ENCODE measurements at regions of chr13 and their contacts with region 1.

Region 1: GRCh38 chr13:100088644-100089464 is at the start of gene PCCA:
- DNase-seq: peak; percentile 94
- H3K4me3 ChIP-seq: peak within 1 kb of the TSS; percentile 56 to 82 (median 82)
- H3K27ac ChIP-seq: peak within 1 kb of the TSS; percentile 43
- H3K4me1 ChIP-seq: peaks cover 8% of the 10 kb centered on the region
- H3K27me3 ChIP-seq: no peaks in the 10 kb centered on the region
- CTCF ChIP-seq: no peak
- POLR2A ChIP-seq: peak; percentile 85
- total RNA-seq, gene PCCA: 19.8 and 20.2 TPM in 2 replicates

Region 2: DNA sequence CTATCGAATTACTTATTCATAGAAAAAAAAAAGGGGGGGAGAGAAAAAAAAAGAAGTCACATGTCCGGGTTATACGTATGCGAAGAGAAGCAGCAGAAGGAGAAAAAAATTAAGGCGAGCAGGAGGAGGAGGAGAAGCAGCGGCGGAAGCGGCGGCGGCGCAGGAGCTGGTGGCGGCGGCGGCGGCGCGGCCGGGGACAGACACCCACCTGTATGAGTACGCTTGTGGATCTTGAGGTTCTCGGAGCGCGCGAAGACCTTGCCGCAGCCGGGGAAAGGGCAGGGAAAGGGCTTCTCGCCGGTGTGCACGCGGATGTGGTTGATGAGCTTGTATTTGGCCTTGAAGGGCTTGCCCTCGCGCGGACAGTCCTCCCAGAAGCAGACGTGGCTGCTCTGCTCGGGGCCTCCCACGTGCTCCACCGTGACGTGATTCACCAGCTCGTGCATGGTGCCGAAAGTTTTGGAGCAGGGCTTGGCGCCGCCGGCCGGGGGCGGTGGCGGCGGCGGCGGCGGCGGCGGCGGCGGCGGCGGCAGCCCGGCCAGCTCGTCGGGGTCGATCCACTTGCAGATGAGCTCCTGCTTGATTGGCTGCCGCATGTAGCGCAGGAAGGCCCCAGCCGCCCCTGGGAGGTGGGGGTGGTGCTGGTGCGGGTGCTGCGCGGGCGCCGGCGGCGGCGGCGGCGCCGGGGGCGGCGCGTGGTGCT is 118.8 kb before region 1 on chr13:
- CTCF ChIA-PET with region 1: no interaction called
- POLR2A ChIA-PET with region 1: no interaction called
- dilution Hi-C with region 1: no loop called
- intact Hi-C with region 1: loop called (anchors 2 kb)
- DNase-seq: no peak
- H3K4me3 ChIP-seq: no peak overlapping the region
- H3K27ac ChIP-seq: no peak overlapping the region
- H3K4me1 ChIP-seq: no peaks in the 10 kb centered on the region
- H3K27me3 ChIP-seq: peaks cover 79 to 94% of the 10 kb centered on the region in 2 experiments
- CTCF ChIP-seq: no peak
- POLR2A ChIP-seq: no peak

Region 3: DNA sequence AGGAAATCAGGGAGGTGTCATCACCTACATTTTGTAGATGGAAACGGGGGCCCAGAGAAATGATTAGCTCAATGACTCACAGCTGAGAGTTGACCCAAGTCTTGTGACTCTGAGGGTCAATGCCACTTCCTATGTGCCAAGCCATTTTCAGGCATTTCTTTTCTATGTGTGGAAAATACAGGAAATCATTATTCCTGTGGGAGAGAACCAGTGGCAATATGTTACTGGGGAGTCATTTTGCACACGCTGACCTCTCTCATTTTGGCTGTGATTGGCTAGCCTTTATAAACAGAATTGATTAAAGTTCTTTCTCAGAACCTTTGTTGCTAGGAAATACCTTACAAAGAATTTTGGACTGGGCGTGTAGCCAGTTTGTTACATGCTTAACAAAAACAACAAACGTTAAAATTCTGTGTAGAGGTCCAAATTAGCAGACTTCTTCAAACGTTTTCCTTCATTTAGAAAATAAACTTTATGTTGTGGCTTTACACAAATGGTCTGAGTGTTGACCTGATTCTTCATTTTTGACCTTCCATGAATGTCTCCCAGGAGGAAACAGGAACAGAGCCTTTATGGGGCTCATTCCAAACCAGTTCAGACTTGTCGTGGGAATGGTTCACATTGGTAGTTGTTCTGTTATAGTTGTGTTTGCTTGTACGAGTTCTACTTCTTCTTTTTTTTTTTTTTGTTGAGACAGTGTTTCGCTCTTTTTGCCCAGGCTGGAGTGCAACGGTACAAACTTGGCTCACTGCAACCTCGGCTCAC is 11.4 kb after region 1 on chr13:
- CTCF ChIA-PET with region 1: interaction called, 11 read pairs
- POLR2A ChIA-PET with region 1: no interaction called
- dilution Hi-C with region 1: no loop called
- intact Hi-C with region 1: loop called (anchors 1 kb)
- DNase-seq: peak; percentile 96
- H3K4me3 ChIP-seq: peak overlapping the region in 1 of 3 experiments; percentile 10
- H3K27ac ChIP-seq: peak overlapping the region; percentile 4
- H3K4me1 ChIP-seq: peaks cover 16% of the 10 kb centered on the region
- H3K27me3 ChIP-seq: no peaks in the 10 kb centered on the region
- CTCF ChIP-seq: no peak
- POLR2A ChIP-seq: no peak

Region 4: GRCh38 chr13:100131863-100132574 is 43.2 kb after region 1 on chr13:
- CTCF ChIA-PET with region 1: no interaction called
- POLR2A ChIA-PET with region 1: no interaction called
- dilution Hi-C with region 1: no loop called
- intact Hi-C with region 1: loop called (anchors 1 kb)
- DNase-seq: peak; percentile 97
- H3K4me3 ChIP-seq: no peak overlapping the region
- H3K27ac ChIP-seq: peak overlapping the region; percentile 57
- H3K4me1 ChIP-seq: peaks cover 20% of the 10 kb centered on the region
- H3K27me3 ChIP-seq: no peaks in the 10 kb centered on the region
- CTCF ChIP-seq: no peak
- POLR2A ChIP-seq: no peak

Region 5: DNA sequence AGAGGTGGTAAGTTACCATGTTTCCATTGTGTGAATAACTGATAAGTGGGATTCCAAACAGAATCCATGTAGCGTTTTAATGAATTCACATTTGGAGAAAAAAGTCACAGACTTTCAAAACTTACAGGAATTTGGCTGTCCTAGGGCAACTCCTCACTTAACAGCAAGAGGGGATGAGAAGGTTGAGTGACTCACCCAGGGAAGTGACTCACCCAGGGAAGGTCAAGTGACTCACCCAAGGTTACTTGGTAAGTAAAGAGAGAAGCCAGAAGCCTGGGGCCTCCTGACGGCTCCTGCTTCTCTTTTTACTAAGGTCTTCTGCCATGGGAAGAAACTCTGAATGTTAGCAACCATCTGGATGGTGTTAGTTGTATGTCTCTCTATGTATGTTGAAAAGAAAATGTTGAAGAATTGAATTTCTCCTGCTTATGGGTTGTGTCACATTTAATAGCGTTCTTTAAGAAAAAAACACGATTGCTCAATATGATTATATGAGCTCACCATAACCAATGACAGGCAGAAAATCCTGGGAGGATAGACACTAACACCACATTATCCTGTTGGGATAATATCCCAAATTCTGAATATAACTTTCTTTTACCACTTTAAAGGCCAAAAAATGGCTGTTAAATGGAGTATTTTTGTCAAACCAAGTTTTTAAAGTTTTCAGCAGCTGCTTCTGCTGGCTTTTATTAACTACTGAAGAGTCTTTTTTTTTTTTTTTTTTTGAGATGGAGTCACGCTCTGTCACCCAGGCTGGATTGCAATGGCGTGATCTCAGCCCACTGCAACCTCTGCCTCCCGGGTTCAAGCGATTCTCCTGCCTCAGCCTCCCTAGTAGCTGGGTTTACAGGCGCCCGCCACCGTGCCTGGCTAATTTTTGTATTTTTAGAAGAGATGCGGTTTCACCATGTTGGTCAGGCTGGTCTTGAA is 304.1 kb after region 1 on chr13:
- CTCF ChIA-PET with region 1: no interaction called
- POLR2A ChIA-PET with region 1: no interaction called
- dilution Hi-C with region 1: no loop called
- intact Hi-C with region 1: loop called (anchors 2 kb)
- DNase-seq: peak; percentile 99
- H3K4me3 ChIP-seq: no peak overlapping the region
- H3K27ac ChIP-seq: peak overlapping the region; percentile 87
- H3K4me1 ChIP-seq: peaks cover 35% of the 10 kb centered on the region
- H3K27me3 ChIP-seq: no peaks in the 10 kb centered on the region
- CTCF ChIP-seq: no peak
- POLR2A ChIP-seq: no peak

Region 6: DNA sequence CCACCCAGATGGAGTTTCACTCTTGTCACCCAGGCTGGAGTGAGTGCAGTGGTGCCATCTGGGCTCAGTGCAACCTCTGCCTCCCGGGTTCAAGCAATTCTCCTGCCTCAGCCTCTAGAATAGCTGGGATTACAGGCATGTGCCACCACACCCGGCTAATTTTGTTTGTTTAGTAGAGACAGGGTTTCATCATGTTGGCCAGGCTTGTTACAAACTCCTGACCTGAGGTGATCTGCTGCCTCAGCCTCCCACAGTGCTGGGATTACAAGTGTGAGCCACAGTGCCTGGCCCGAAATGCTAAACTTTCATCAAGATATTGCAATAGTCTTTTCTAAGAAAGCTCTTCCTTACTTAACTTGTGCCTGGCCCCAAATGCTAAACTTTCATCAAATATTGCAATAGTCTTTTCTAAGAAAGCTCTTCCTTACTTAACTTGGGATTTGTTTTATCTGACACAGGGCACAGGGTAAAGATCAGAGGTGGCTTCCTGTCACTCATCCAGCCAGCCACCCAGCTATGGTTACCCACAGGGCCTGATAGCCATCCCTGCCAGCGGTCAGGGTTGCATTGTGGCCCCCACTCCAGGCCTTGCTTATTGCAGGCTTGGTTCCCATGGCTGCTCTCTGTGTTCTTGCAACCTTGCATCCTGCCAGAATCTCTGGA is 938.0 kb after region 1 on chr13:
- CTCF ChIA-PET with region 1: no interaction called
- POLR2A ChIA-PET with region 1: no interaction called
- dilution Hi-C with region 1: no loop called
- intact Hi-C with region 1: no loop called
- DNase-seq: no peak
- H3K4me3 ChIP-seq: no peak overlapping the region
- H3K27ac ChIP-seq: no peak overlapping the region
- H3K4me1 ChIP-seq: no peaks in the 10 kb centered on the region
- H3K27me3 ChIP-seq: no peaks in the 10 kb centered on the region
- CTCF ChIP-seq: no peak
- POLR2A ChIP-seq: no peak

Measured in endothelial cell of umbilical vein (primary cell).